CD4-positive, alpha-beta memory T cell (primary cell): ENCODE measurements at regions of chr1 and their contacts with region 1.

Region 1: DNA sequence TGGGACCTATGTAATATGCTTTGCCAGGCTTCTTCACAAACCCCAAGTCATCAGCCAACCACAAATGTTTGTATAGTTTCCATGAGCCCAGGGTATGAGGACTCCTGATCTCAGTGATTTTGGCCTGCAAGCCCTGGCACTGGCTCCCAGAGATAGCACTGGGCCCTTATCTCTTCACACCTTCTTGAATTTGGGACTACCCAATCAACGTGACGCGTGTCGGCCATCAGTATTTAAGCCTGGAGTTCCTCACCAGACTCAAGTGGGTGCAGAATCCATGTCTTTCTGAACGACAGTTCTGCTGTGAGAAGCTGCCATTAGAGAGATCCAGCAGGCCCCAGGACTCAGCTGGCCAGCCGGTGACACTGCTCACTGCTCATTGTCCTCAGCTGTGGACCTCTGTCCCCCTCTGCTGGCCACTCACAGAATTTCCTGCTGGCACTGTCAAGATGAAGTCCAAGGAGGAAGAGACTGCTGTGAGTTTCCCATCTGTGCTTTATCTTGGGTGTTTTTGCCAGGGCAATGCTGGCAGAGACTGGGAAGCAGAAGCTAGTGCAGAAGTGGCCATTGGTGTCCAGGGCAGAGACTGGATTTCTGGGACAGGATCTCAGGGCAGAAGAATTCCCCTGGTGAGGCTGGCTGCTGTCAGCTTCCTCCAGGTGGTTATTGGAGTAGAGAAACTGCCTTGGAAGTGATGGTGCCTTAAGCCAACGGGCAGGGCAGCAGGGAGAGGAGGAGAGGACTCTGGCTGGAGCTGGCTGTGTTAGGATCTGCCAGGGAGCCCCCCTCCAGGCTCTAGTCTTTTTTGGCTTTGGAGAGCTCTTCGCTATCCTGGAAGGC is 28.4 kb downstream of the TMCC2 start:
- DNase-seq: peak; percentile 76 to 82 (median 80)
- H3K4me3 ChIP-seq: no peak overlapping the region
- H3K4me3 Mint-ChIP-seq: no peak overlapping the region
- H3K27ac ChIP-seq: no peak overlapping the region
- H3K27ac Mint-ChIP-seq: peak overlapping the region in 1 of 7 donors; percentile 46
- H3K4me1 ChIP-seq: no peaks in the 10 kb centered on the region
- H3K4me1 Mint-ChIP-seq: peaks cover 0 to 2% (median 0%) of the 10 kb centered on the region in 4 donors
- H3K27me3 ChIP-seq: no peaks in the 10 kb centered on the region
- H3K27me3 Mint-ChIP-seq: peaks cover 0 to 5% of the 10 kb centered on the region in 2 donors

Region 2: DNA sequence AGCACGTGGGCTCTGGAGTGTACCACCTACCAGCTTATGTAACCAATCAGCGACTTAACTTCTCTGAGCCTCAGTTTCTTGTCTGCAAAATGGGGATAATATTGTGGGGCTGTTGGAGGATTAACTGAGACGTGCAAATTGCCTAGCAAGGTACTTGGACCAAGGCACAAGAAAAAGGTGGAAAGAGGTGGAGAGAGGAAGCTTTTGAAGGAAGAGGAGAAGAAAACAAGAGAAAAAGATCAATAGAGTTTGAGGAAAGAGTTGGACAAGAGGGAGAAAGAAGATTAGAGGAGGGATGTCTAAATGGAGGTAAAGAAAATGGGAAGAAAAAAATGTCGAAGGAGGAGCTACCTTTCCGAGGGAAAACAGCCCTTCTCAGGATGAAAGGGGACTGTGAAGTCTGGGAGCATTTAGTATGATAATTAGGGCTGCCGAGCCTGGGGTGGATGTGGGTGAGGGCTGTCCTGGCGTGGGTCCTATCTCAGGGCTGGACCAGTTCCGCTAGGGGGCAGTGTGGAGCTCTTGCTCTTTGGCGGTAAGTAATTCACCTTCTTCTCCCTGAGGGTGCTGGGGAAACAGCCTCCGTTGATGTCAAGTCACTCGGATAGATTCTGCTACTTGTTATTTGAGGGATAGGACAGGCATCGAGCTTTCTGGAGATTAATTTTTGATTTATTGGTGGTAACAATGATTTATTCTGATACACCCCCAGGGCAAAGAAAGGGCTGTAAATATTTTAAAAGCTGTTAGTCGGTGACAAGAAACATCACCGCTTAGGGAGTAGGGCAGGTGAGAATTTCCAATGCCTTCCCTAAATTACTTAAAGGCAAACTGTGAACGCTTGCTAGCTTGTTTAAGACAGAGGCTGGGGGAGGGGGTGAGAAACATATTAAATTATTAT is 464.5 kb before region 1 on chr1:
- CTCF ChIA-PET with region 1: interaction called, 3 read pairs
- POLR2A ChIA-PET with region 1: no interaction called
- intact Hi-C with region 1: loop called (anchors 10 kb)
- DNase-seq: peak; percentile 67 to 73 (median 69)
- H3K4me3 ChIP-seq: no peak overlapping the region
- H3K4me3 Mint-ChIP-seq: no peak overlapping the region
- H3K27ac ChIP-seq: no peak overlapping the region
- H3K27ac Mint-ChIP-seq: no peak overlapping the region
- H3K4me1 ChIP-seq: no peaks in the 10 kb centered on the region
- H3K4me1 Mint-ChIP-seq: peaks cover 0 to 5% (median 0%) of the 10 kb centered on the region in 4 donors
- H3K27me3 ChIP-seq: peaks cover 4% of the 10 kb centered on the region
- H3K27me3 Mint-ChIP-seq: peaks cover 30 to 32% of the 10 kb centered on the region in 2 donors

Region 3: DNA sequence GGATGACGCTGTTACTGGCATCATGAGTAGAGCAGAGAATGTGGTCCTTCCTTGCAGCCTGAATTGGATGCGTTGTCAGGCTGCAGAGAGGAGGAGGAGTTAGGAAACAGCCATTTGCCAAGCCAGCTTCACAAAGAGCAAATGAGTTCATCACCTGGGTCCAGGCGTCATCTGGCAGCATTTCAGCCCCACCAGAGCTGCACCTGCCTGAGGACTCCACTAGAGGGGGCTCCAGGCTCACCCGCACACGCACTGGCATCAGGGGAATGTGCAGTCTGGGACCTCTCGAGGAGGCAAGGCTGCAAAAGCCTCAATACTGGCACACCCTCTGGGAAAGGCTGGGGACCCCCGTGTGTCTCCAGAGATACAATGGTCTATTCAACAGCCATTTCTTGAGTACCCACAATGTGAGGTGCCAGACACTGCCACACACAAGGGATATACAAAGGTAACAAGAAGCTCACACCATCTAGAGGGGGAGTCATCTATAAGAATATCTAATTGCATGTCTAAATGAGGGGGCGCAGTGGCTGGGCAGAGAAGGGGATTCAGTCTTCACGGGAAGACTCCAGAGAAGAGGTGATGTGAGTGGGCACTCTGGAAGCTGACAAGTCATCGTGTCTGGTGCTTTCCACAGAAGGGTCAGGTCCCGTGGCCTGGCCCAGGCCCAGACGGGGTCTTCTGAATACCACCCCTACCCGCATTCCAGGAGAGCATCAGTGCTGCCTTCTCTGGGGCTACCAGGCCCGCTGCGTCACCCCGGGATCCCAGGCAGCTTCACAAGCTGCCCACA is 266.7 kb before region 1 on chr1:
- CTCF ChIA-PET with region 1: interaction called, 21 read pairs
- POLR2A ChIA-PET with region 1: no interaction called
- intact Hi-C with region 1: loop called (anchors 1 kb)
- DNase-seq: peak in 4 of 5 donors; percentile 19 to 37 (median 24)
- H3K4me3 ChIP-seq: no peak overlapping the region
- H3K4me3 Mint-ChIP-seq: no peak overlapping the region
- H3K27ac ChIP-seq: no peak overlapping the region
- H3K27ac Mint-ChIP-seq: no peak overlapping the region
- H3K4me1 ChIP-seq: no peaks in the 10 kb centered on the region
- H3K4me1 Mint-ChIP-seq: peaks cover 2 to 8% (median 6%) of the 10 kb centered on the region in 4 donors
- H3K27me3 ChIP-seq: no peaks in the 10 kb centered on the region
- H3K27me3 Mint-ChIP-seq: peaks cover 0 to 14% of the 10 kb centered on the region in 2 donors

Region 4: DNA sequence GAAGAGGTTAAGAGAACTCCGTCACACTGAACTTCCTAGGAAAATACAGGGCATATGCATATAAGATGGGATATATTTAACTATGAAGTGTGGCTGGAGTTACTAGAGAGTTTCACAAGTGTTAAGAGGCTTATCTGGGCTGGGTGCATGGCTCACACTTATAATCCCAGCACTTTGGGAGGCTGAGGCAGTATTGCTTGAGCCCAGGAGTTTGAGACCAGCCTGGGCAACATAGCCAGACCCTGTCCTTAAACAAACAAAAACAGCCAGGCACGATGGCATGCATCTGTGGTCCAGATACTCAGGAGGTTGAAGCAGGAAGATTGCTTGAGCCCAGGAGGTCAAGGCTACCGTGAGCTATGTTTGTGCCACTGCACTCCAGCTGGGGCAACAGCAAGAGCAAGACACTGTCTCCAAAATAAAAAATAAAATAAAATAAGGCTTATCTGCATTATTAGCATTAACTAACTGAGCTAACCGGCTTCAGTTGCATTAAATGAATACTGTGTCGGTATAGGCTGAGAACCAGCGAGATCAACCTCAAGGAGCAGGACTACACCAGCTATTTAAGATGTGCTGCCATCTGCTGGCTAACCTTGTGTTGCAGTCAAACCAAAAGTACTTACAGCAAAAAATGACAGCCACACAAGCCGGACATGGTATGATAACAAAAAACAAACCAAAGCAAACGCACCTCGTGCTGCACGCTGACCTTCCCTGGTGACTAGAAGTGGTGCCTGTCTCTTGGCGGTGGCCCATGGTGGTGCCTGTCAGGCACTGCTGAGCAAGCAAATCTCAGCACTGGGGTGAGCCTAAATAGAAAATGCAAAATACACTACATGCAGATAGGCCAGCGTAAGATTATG is 114.7 kb before region 1 on chr1:
- CTCF ChIA-PET with region 1: interaction called, 58 read pairs
- POLR2A ChIA-PET with region 1: no interaction called
- intact Hi-C with region 1: loop called (anchors 2 kb)
- DNase-seq: peak; percentile 53 to 73 (median 64)
- H3K4me3 ChIP-seq: no peak overlapping the region
- H3K4me3 Mint-ChIP-seq: peak overlapping the region in 5 of 8 donors; percentile 8 to 68 (median 62)
- H3K27ac ChIP-seq: no peak overlapping the region
- H3K27ac Mint-ChIP-seq: peak overlapping the region in 1 of 7 donors; percentile 1
- H3K4me1 ChIP-seq: peaks cover 11% of the 10 kb centered on the region
- H3K4me1 Mint-ChIP-seq: peaks cover 4 to 11% (median 6%) of the 10 kb centered on the region in 4 donors
- H3K27me3 ChIP-seq: no peaks in the 10 kb centered on the region
- H3K27me3 Mint-ChIP-seq: no peaks in the 10 kb centered on the region

Region 5: DNA sequence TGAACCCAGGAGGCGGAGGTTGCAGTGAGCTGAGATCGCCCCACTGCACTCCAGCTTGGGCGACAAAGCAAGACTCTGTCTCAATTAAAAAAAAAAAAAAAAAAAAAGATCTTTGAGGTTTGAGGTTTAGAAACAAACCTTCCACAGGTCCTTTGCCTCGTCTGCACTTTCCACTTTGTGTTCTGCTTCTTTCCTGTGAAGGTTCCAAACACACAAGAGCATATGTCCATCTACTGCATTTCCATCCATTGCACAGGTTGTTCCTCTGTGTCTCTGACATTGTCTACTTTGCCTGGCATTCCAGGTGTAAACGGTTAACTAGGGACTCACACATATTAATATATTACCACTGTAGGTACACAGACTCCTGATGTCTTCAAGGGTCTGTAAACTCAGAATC is 84.8 kb before region 1 on chr1:
- CTCF ChIA-PET with region 1: no interaction called
- POLR2A ChIA-PET with region 1: no interaction called
- intact Hi-C with region 1: no loop called
- DNase-seq: peak in 4 of 5 donors; percentile 11 to 26 (median 18)
- H3K4me3 ChIP-seq: no peak overlapping the region
- H3K4me3 Mint-ChIP-seq: peak overlapping the region in 7 of 8 donors; percentile 28 to 86 (median 58)
- H3K27ac ChIP-seq: no peak overlapping the region
- H3K27ac Mint-ChIP-seq: peak overlapping the region in 6 of 7 donors; percentile 5 to 76 (median 55)
- H3K4me1 ChIP-seq: peaks cover 20% of the 10 kb centered on the region
- H3K4me1 Mint-ChIP-seq: peaks cover 14 to 47% (median 24%) of the 10 kb centered on the region in 4 donors
- H3K27me3 ChIP-seq: no peaks in the 10 kb centered on the region
- H3K27me3 Mint-ChIP-seq: no peaks in the 10 kb centered on the region

Region 6: DNA sequence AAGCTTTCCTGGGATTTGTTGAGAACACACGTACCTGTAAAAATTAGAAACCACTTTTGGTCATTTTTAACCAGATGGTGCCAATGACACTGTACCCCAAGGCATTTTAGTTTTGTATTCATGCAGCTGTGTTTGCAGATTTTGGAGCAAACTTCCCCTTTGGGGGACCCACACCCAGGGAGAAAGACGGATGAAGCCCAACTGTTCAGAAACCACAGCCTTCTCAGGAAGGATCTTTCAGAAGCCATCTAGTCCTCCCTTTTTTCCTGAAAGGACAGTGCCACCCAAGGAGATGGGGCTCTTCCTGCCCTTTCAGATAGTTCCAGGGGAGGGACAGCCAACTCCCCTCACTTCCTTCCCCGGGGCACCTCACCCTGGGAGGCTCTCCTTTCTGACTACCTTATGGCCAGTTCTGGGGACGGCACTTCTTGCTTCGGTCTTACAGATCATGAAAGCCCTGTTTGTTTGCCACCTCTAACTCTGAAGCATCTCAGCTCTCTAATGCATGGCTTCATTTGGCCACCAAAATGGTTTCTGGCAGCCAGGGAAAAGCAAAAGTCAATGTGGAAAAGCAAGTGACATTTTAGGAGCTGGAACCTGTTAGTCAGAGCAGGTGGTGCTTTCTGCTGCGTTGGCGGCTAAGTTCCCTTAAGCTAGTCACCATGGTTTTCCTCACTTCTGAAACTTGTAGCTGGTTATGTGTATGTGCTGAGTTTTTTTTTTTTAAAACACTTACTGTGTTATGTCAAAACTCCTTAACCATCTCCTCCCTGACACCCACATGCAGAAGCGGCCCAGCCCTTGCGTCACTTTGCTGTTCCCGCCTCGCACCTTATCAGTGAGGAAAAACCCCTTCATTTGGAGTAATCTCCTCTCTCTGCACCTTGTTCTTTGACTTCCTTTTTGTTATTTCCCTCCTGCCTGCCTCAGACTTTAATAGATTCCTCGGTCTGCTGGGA is 18.4 kb before region 1 on chr1:
- CTCF ChIA-PET with region 1: interaction called, 19 read pairs
- POLR2A ChIA-PET with region 1: no interaction called
- intact Hi-C with region 1: no loop called
- DNase-seq: no peak
- H3K4me3 ChIP-seq: no peak overlapping the region
- H3K4me3 Mint-ChIP-seq: no peak overlapping the region
- H3K27ac ChIP-seq: no peak overlapping the region
- H3K27ac Mint-ChIP-seq: peak overlapping the region in 1 of 7 donors; percentile 26
- H3K4me1 ChIP-seq: peaks cover 10% of the 10 kb centered on the region
- H3K4me1 Mint-ChIP-seq: peaks cover 0 to 8% (median 1%) of the 10 kb centered on the region in 4 donors
- H3K27me3 ChIP-seq: no peaks in the 10 kb centered on the region
- H3K27me3 Mint-ChIP-seq: peaks cover 3 to 13% of the 10 kb centered on the region in 2 donors